ENCODE measurements at regions of chr11 and their contacts with region 1.

Region 1: DNA sequence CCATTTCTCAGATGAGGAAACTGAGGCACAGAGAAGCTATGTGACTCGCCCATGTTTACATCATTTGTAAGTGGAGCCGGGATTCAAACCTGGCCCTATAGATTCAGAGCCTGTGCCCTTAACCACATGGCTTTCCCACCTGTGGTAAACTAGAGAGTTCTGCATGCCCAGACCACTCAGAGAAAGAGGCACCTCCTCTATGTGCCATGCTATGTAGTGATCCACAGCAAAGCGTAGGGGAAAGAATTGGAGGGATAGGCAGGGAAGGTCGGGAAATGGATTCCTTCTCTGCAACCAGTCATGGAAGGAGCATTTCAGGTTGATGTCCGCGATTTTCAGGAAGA is 15.4 kb upstream of the POU2AF2 start:
- DNase-seq: no peak
- H3K4me3 Mint-ChIP-seq: peak overlapping the region; percentile 68
- H3K27ac Mint-ChIP-seq: peak overlapping the region; percentile 43
- H3K4me1 Mint-ChIP-seq: peaks cover 28% of the 10 kb centered on the region
- H3K27me3 Mint-ChIP-seq: peaks cover 46% of the 10 kb centered on the region

Region 2: DNA sequence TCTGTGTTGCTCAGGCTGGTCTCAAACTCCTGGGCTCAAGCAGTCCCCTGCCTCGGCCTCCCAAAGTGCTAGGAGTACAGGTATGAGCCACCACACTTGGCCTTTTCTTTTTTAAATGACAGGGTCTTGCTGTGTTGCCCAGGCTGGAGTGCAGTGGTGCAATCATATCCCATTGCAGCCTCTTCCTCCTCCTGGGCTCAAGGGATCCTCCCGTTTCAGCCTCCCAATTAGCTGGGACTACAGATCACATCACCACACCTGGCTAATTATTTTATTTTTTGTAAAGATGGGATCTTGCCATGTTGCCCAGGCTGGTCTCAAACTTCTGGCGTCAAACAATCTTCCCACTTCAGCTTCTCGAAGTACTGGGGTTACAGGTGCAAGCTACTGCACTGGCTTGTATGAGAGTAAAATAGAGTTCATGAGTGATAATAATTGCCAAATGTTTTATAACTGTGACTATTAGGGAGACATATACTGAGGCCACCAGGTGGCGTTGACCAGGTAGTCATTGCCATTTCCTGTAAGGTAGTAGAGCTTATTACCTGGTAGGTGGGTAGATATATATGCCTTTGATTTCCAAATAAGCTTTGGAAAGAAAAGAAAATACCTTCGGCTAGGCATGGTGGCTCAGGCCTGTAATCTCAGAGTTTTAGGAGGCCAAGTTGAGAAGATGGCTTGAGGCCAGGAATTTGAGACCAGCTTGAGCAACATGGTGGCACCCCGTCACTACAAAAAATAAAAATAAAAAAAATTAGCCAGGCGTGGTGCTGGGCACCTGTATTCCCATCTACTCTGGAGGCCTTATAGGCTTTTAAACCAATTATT is 794.9 kb before region 1 on chr11:
- CTCF ChIA-PET with region 1: interaction called, 19 read pairs
- DNase-seq: peak; percentile 50
- H3K4me3 Mint-ChIP-seq: no peak overlapping the region
- H3K27ac Mint-ChIP-seq: no peak overlapping the region
- H3K4me1 Mint-ChIP-seq: peaks cover 36% of the 10 kb centered on the region
- H3K27me3 Mint-ChIP-seq: no peaks in the 10 kb centered on the region

Region 3: GRCh38 chr11:110447897-110448745 is 782.0 kb before region 1 on chr11:
- CTCF ChIA-PET with region 1: interaction called, 17 read pairs
- DNase-seq: no peak
- H3K4me3 Mint-ChIP-seq: no peak overlapping the region
- H3K27ac Mint-ChIP-seq: no peak overlapping the region
- H3K4me1 Mint-ChIP-seq: peaks cover 28% of the 10 kb centered on the region
- H3K27me3 Mint-ChIP-seq: no peaks in the 10 kb centered on the region

Region 4: DNA sequence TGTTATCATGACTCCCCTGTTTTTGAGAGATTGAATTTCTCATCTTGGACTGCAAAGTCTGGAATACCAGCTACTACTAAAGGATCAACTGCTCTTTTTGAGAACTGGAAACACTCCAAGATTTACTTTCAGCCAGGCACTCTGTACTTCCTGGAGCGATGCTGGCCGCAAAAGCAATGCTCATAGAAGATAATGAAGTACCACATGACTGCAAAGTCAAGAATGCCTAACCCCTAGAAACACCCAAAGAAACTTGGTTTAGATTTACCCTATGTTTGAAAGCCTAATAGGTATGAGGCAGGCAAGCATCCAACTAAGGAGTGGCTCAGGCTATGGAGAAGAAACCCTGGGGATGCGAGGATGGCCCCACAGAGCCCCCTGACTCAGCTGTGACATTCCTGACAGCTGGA is 470.1 kb before region 1 on chr11:
- CTCF ChIA-PET with region 1: no interaction called
- DNase-seq: no peak
- H3K4me3 Mint-ChIP-seq: no peak overlapping the region
- H3K27ac Mint-ChIP-seq: no peak overlapping the region
- H3K4me1 Mint-ChIP-seq: no peaks in the 10 kb centered on the region
- H3K27me3 Mint-ChIP-seq: no peaks in the 10 kb centered on the region

Region 5: DNA sequence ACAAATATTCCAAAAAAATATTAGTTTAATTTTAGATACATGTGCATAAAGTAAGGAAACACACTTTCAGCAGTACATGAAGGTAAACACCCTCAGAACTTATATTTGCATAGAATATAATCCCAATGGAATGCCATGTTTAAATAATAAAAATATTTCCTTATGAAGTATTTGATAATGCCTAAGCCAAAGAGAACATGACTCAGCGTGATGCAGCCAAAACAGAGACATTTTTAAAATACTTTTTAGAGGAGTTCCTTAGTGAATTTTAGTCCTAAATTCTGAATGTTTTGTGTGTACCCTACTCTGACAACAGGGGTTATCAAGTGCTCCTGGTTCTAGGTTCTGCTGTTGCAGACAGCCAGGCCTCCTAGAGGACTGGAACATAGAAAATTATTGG is 23.6 kb before region 1 on chr11:
- CTCF ChIA-PET with region 1: no interaction called
- DNase-seq: no peak
- H3K4me3 Mint-ChIP-seq: no peak overlapping the region
- H3K27ac Mint-ChIP-seq: no peak overlapping the region
- H3K4me1 Mint-ChIP-seq: peaks cover 6% of the 10 kb centered on the region
- H3K27me3 Mint-ChIP-seq: peaks cover 15% of the 10 kb centered on the region

Measured in activated naive CD4-positive, alpha-beta T cell treated with anti-CD3 and anti-CD28 coated beads, Interleukin-2, amount 10 ng/mL, durations not matched to agents 7 days and 5 days (primary cell).